PC-9 (cell line): ENCODE measurements at regions of chr14 and their contacts with region 1.

Region 1: DNA sequence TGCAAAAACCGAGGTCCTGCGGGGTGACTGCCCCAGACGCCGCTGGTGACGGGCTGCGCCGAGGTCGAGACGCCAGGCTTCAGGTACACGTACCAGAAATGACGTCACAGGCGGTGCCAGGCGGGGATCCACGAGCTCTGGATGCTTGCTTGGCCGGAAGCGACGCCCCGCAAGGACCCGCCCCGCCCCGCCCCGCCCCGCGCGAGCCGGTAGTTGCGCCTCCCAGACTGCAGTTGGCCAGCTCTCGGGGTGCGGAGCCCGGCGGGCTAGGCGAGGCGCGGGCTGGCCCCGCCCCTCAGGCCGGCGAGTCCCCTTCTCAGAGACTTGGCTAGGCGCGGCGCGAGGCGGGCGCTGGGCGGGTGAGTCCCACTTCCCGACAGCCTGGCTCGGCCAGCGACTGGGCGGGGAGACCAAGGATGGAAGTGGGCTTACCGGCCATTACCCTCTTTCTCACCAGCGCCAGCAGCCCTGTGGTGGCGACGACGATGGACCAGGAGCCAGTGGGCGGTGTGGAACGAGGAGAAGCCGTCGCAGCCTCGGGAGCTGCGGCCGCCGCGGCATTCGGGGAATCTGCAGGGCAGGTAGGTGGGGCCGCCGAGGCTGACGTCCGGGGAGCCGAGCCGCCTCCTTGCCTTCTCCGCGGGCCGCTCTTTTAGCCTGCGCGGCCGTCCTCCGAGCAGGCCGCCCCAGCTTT is at the start of gene FAM177A1:
- DNase-seq: peak; percentile 87 to 95
- H3K4me3 ChIP-seq: peak within 1 kb of the TSS; percentile 87
- H3K27ac ChIP-seq: peak within 1 kb of the TSS; percentile 76
- H3K4me1 ChIP-seq: peaks cover 23% of the 10 kb centered on the region
- H3K27me3 ChIP-seq: no peaks in the 10 kb centered on the region
- CTCF ChIP-seq: no peak
- total RNA-seq, gene FAM177A1: 31.6 and 34.4 TPM in 2 replicates

Region 2: DNA sequence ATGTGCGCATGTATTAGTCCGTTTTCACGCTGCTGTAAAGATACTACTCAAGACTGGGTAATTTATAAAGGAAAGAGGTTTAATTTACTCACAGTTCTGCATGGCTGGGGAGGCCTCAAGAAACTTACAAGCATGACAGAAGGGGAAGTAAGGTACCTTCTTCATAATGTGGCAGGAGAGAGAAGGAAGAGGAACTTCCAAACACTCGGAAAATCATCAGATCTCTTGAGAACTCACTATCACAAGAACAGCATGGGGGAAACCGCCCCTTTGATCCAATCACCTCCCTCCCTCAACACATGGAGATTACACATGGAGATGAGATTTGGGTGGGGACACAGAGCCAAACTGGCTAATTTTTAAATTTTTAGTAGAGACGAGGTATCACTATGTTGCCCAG is 374.5 kb before region 1 on chr14:
- CTCF ChIA-PET with region 1: no interaction called
- POLR2A ChIA-PET with region 1: no interaction called
- intact Hi-C with region 1: loop called (anchors 5 kb)
- DNase-seq: no peak
- H3K4me3 ChIP-seq: no peak overlapping the region
- H3K27ac ChIP-seq: no peak overlapping the region
- H3K4me1 ChIP-seq: peaks cover 3% of the 10 kb centered on the region
- H3K27me3 ChIP-seq: no peaks in the 10 kb centered on the region
- CTCF ChIP-seq: no peak

Region 3: GRCh38 chr14:34982417-34983147 is 63.6 kb before region 1 on chr14 and contains the start of gene SRP54:
- CTCF ChIA-PET with region 1: no interaction called
- POLR2A ChIA-PET with region 1: interaction called, 11 read pairs
- intact Hi-C with region 1: no loop called
- DNase-seq: peak; percentile 87 to 96
- H3K4me3 ChIP-seq: peak within 1 kb of the TSS; percentile 89
- H3K27ac ChIP-seq: peak within 1 kb of the TSS; percentile 95
- H3K4me1 ChIP-seq: peaks cover 21% of the 10 kb centered on the region; the same call in 1 of the 2 replicates
- H3K27me3 ChIP-seq: no peaks in the 10 kb centered on the region
- CTCF ChIP-seq: no peak
- total RNA-seq, gene SRP54: 34.0 and 44.5 TPM in 2 replicates

Region 4: DNA sequence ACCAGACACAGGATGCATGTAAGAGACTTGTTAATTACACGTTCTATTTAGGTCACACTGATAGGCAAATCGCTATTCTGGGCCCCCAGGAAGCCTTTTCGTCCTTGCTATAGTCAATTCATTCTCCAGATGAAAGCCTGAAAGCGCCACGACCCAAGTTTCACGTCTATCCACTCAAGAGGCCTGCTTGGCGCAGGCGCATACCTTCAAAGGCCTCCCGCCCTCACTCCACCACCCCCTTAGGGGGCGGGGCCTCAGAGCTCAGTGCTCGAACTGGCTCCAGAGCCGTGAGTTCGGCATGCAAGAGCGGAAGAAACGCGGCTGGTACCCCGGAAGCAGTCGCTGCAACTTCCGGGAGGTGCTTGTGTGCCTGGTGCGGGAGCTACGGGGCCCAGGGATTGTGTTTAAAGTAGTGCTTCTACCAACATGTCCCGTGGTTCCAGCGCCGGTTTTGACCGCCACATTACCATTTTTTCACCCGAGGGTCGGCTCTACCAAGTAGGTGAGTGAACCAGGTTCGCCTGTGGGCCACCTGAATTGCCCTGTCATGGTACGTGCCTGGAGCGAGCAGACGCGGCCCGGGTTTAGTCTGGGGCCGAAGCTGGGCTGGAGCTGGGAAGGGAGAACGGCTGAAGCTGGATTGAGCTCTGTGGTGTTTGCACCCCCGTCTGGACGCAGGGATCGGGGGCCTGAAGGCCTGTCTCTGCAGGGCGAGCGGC is 246.0 kb after region 1 on chr14 and contains the start of gene PSMA6:
- CTCF ChIA-PET with region 1: no interaction called
- POLR2A ChIA-PET with region 1: no interaction called
- intact Hi-C with region 1: loop called (anchors 5 kb)
- DNase-seq: peak; percentile 94 to 95
- H3K4me3 ChIP-seq: peak within 1 kb of the TSS; percentile 94
- H3K27ac ChIP-seq: peak within 1 kb of the TSS; percentile 67
- H3K4me1 ChIP-seq: peaks cover 21% of the 10 kb centered on the region
- H3K27me3 ChIP-seq: no peaks in the 10 kb centered on the region
- CTCF ChIP-seq: no peak
- total RNA-seq, gene PSMA6: 118 and 188 TPM in 2 replicates

Region 5: GRCh38 chr14:35747379-35747778 is 701.2 kb after region 1 on chr14:
- CTCF ChIA-PET with region 1: no interaction called
- POLR2A ChIA-PET with region 1: no interaction called
- intact Hi-C with region 1: no loop called
- DNase-seq: peak in 1 of 2 experiments; percentile 68
- H3K4me3 ChIP-seq: no peak overlapping the region
- H3K27ac ChIP-seq: no peak overlapping the region
- H3K4me1 ChIP-seq: no peaks in the 10 kb centered on the region
- H3K27me3 ChIP-seq: no peaks in the 10 kb centered on the region
- CTCF ChIP-seq: no peak